HepG2 (cell line): ENCODE measurements at regions of chr6 and their contacts with region 1.

Region 1: GRCh38 chr6:81491454-81492101 is 260.9 kb downstream of the TENT5A start:
- DNase-seq: peak; percentile 70
- ATAC-seq: peak; percentile 83
- H3K4me3 ChIP-seq: no peak overlapping the region; a peak in 1 of 6 replicates
- H3K27ac ChIP-seq: peak overlapping the region; percentile 44
- H3K4me1 ChIP-seq: peaks cover 24% of the 10 kb centered on the region
- H3K27me3 ChIP-seq: no peaks in the 10 kb centered on the region
- CTCF ChIP-seq: no peak
- EP300 ChIP-seq: peak in 1 of 2 experiments; percentile 76; a peak in 1 of 4 replicates
- POLR2A ChIP-seq: no peak
- RAD21 ChIP-seq: no peak

Region 2: DNA sequence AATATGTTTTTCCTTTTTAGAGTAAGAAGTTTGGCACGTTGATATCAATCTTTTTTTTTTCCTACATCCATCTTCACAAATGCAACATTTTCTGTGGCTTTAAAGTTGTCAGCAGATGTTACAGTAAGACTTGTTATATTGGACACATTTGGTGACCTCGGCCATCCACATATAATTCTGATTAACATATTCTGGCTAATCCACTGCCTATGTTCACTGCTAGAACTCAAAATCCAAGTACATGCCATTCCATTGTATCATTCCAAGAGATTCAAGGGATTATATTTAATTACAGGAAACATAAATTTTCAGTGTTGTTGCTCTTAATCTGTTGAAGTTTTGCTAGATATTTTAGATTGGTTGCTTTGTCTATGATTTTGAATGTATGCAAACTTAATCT is 106.7 kb before region 1 on chr6:
- CTCF ChIA-PET with region 1: no interaction called
- POLR2A ChIA-PET with region 1: no interaction called
- in situ Hi-C with region 1: no loop called
- intact Hi-C with region 1: loop called (anchors 1 kb)
- DNase-seq: no peak
- ATAC-seq: no peak
- H3K4me3 ChIP-seq: no peak overlapping the region
- H3K27ac ChIP-seq: no peak overlapping the region
- H3K4me1 ChIP-seq: peaks cover 47% of the 10 kb centered on the region
- H3K27me3 ChIP-seq: no peaks in the 10 kb centered on the region
- CTCF ChIP-seq: no peak
- EP300 ChIP-seq: no peak
- POLR2A ChIP-seq: no peak
- RAD21 ChIP-seq: no peak

Region 3: DNA sequence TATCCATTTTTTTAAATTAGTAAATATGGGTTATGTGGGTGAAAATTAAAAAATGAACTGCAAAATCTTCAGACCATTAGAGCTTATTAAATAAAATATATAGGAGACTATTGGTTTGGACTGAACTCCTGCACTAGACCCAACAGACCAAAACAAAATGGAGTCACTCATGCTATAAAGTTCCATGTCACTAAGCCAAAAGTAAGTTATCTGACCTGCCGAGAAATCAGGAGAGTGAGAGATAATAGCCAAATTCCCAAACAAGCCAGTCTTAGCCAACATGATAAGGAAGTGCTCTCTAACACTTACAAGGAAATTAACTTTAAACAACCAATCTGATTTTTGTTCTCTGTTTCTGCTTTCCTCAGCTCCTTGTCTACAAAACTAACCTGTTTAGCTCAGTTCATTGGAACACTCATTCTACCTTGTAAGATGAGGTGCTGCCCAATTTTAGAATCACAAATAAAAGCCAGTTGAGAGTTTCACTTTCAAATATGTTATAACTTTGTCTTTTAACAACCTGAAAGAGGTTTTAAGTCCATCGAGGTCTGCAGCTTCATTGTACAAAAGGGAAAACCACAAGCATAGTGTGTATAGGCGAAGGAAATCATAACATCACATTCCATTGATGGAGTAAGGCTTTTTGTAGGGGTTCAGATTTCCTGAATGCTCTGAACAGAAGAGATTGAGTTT is 40.4 kb after region 1 on chr6:
- CTCF ChIA-PET with region 1: no interaction called
- POLR2A ChIA-PET with region 1: no interaction called
- in situ Hi-C with region 1: no loop called
- intact Hi-C with region 1: no loop called
- DNase-seq: no peak
- ATAC-seq: no peak
- H3K4me3 ChIP-seq: no peak overlapping the region
- H3K27ac ChIP-seq: no peak overlapping the region
- H3K4me1 ChIP-seq: no peaks in the 10 kb centered on the region
- H3K27me3 ChIP-seq: no peaks in the 10 kb centered on the region
- CTCF ChIP-seq: no peak
- EP300 ChIP-seq: no peak
- POLR2A ChIP-seq: no peak
- RAD21 ChIP-seq: no peak

Region 4: DNA sequence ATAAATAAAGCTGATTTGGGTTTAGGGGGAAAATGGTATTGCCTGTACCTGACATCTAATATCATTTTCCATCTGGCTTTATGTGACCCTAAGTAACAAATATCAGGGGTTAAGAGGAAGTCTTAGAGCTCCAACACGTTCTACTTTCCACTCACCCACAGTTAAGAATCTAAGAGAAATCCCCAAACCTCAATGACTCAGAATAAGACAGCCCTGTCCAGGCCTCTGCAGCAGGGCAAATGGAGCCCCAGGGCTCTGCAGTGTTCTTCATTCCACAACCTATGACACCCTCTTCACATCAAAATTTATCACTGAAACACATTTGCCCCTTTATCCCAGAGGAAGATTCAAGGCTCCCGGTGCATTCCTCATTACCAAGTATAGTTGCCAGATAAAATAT is 281.2 kb after region 1 on chr6:
- CTCF ChIA-PET with region 1: no interaction called
- POLR2A ChIA-PET with region 1: no interaction called
- in situ Hi-C with region 1: no loop called
- intact Hi-C with region 1: no loop called
- DNase-seq: no peak
- ATAC-seq: no peak
- H3K4me3 ChIP-seq: no peak overlapping the region
- H3K27ac ChIP-seq: no peak overlapping the region
- H3K4me1 ChIP-seq: peaks cover 76% of the 10 kb centered on the region
- H3K27me3 ChIP-seq: no peaks in the 10 kb centered on the region
- CTCF ChIP-seq: no peak
- EP300 ChIP-seq: no peak
- POLR2A ChIP-seq: no peak
- RAD21 ChIP-seq: no peak